Mammary epithelial cell (primary cell): ENCODE measurements at regions of chr10 and their contacts with region 1.

Region 1: DNA sequence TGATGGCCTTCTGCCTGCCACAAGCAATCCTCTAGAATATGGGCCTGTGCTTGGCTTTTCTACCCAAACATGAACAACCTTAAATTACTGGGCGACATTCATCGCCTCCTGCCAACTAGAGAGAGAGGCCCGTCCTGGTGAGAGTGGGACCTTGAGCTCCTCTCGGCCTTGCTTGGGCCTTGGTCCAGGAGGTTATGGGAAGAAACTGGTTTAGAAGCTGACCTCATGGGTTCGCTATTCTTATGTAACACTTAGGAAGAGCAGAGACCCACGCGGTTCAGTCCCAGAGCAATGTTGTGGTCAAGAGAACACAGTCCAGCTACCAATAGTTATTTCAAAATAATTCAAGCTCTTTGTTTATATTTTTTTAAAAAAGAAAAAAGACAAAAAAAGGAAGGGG is 176.3 kb upstream of the ZNF32 start:
- DNase-seq: no peak
- H3K4me3 ChIP-seq: no peak overlapping the region
- H3K27ac ChIP-seq: no peak overlapping the region
- H3K4me1 ChIP-seq: no peaks in the 10 kb centered on the region
- H3K27me3 ChIP-seq: no peaks in the 10 kb centered on the region
- CTCF ChIP-seq: no peak

Region 2: DNA sequence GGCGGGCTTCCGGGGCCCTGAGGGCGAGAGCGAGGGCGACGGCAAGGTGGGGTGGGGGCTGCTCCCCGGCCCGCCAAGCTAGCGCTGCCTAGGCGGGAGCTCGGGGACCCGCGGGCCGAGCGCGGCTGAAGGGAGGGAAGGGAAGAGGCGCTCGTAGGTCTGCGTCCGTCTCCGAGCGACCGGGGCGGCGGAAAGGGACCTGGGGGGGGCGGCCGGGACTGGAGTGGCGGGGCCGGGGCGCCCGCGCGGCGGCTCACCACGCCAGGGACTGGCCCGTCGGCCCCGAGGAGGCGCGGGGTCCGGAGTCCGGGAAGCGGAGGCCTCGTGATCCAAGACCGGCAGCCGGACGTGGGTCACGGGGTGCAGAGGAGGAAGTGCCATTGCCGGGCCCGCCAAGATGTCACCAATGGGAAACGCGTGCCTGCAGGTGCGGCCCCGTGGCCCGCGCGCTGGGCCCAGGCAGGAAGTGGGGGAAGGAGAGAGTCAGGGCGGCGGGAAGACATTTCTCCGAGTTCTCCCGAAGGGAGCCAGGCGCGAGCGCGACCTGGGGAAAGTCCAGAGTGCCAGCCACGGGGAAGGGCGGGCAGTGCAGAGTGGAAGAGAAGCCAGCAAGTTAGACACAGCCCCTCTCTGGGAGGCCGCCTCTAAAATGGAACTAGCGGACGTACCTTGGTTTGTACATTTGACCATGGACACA is 427.9 kb before region 1 on chr10:
- CTCF ChIA-PET with region 1: no interaction called
- dilution Hi-C with region 1: no loop called
- in situ Hi-C with region 1: no loop called
- intact Hi-C with region 1: no loop called
- DNase-seq: peak; percentile 91
- H3K4me3 ChIP-seq: peak overlapping the region; percentile 56 to 63 (median 57)
- H3K27ac ChIP-seq: peak overlapping the region; percentile 67
- H3K4me1 ChIP-seq: peaks cover 41% of the 10 kb centered on the region
- H3K27me3 ChIP-seq: no peaks in the 10 kb centered on the region
- CTCF ChIP-seq: no peak

Region 3: DNA sequence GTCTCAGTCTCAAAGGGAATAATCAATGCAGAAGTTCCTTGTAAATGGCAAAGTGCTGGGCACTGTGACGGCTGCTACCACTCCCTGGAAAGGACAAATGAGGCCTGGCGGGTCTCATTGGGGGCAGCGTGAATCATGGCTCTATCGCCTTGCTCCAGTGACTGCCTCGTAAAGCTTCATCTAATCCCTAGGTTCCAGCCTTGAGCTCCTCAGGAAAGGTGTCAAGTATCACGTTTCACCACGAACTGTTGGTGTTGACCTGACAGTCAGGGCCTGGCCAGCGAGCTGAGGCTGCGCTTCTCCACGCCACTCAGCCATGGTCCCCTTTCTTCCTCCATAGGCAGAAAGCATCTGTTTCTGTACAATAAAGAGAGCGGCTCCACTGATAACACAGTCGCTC is 49.5 kb before region 1 on chr10:
- CTCF ChIA-PET with region 1: no interaction called
- dilution Hi-C with region 1: loop called (anchors 5 kb)
- in situ Hi-C with region 1: no loop called
- intact Hi-C with region 1: no loop called
- DNase-seq: no peak
- H3K4me3 ChIP-seq: no peak overlapping the region
- H3K27ac ChIP-seq: no peak overlapping the region
- H3K4me1 ChIP-seq: no peaks in the 10 kb centered on the region
- H3K27me3 ChIP-seq: no peaks in the 10 kb centered on the region
- CTCF ChIP-seq: no peak

Region 4: DNA sequence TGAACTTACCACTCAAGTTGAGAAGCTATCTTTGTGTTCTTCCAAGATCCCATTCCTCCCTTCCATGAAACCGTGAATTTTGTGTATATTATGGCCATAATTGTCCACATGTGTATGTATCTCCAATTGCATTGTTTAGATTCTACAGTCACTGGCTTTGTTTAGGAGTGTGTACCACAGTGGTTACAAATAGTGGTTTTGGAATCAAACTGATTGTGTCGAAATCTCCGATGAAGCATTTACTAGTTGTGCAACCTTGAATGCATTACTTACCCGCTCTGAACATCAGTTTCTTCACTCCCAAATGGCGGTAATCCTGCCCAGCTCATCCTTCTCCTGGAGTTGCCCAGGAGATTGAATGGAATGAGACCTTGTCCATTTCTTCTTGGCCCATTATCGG is 31.2 kb before region 1 on chr10:
- CTCF ChIA-PET with region 1: no interaction called
- dilution Hi-C with region 1: no loop called
- in situ Hi-C with region 1: no loop called
- intact Hi-C with region 1: no loop called
- DNase-seq: no peak
- H3K4me3 ChIP-seq: no peak overlapping the region
- H3K27ac ChIP-seq: no peak overlapping the region
- H3K4me1 ChIP-seq: no peaks in the 10 kb centered on the region
- H3K27me3 ChIP-seq: no peaks in the 10 kb centered on the region
- CTCF ChIP-seq: no peak

Region 5: DNA sequence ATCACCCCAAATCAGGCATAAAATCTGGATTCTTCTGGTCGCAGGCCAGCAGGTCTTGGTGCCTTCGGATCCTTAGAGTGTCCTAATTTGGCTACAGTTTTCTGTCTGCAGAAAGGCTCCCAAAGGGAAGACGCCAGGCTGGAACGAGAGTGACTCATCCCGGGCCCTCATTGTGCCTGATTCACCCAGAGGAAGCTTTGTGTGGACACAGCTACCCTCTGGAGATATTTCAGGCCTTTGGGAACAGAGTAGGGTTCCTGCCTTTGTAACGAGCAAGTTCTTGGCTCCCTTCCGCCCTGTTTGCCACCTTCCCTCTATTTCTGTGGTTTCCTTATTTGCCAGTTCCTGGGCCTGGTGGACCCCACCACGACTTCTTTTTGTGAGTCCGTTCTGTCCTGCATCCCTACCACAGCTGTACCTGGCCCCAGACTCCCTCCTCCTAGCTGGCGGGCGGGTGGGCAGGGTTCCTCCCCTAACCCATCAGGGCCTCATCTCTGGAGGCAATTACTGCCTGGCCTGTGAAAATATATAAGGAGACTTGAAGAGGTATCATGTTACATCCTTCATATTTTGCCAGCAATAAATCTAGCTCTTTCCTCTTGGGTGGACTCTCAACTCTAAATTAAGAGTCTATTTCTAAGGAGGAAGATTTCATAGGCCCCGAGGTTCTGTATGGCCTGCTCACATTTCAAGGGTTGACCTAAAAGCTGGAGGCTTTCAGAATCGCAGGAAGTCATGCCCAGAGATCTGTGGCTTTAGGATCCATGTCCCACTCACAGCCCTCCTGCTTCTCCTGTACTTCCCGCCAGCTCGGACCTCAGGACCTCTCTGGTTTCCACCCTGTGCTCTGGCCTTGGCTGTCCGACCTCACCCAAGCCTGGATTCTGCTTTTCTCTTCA is 43.0 kb after region 1 on chr10:
- CTCF ChIA-PET with region 1: no interaction called
- dilution Hi-C with region 1: loop called (anchors 5 kb)
- in situ Hi-C with region 1: no loop called
- intact Hi-C with region 1: no loop called
- DNase-seq: no peak
- H3K4me3 ChIP-seq: no peak overlapping the region
- H3K27ac ChIP-seq: no peak overlapping the region
- H3K4me1 ChIP-seq: no peaks in the 10 kb centered on the region
- H3K27me3 ChIP-seq: peaks cover 1% of the 10 kb centered on the region
- CTCF ChIP-seq: no peak